Common myeloid progenitor, CD34-positive (primary cell): ENCODE measurements at regions of chr19 and their contacts with region 1.

Region 1: DNA sequence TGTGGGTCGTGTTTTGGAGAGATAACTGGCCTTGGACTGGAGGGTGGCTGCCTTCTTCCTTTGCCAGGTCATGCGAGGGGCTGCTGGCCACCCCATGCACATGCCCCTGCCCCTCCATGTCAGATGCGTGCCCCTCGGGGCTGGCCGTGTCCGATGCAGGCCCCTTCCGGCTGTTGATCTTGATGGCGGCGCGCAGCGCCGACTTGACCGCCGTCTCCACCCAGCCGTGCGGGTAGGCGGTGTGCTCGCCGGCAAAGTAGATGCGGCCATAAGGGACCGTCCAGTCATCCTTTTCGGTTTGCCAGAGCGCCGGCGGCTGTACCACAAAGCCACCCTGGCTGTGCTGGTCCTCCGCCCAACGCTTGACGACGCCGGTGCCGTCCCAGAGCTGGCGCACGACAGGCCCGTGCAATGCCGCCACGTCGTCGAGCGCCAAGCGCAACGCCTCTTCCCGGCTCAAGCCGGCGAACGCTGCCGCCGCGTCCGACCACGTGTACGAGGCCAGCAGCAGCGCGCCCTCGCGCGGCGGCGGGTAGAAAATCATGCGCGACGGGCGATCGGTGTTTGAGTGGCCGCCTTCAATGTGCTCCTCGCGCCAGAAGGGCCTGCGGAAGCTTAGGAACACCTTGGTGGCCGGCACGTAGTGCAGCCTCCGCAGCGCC is 6.9 kb downstream of the IL4I1 start:
- DNase-seq: peak; percentile 89 to 93 (median 91)
- H3K4me3 ChIP-seq: peak overlapping the region in 4 of 7 experiments; percentile 26 to 55 (median 48)
- H3K27ac ChIP-seq: no peak overlapping the region
- H3K4me1 ChIP-seq: peaks cover 0 to 9% (median 3%) of the 10 kb centered on the region in 4 experiments
- H3K27me3 ChIP-seq: peaks cover 0 to 19% (median 5%) of the 10 kb centered on the region in 5 experiments

Region 2: GRCh38 chr19:49877020-49877878 is 12.6 kb before region 1 on chr19 and contains the starts of genes AKT1S1 and TBC1D17:
- CTCF ChIA-PET with region 1: interaction called, 6 read pairs
- POLR2A ChIA-PET with region 1: interaction called, 10 read pairs
- DNase-seq: peak; percentile 100
- H3K4me3 ChIP-seq: peak within 1 kb of the TSS; percentile 68 to 100 (median 100)
- H3K27ac ChIP-seq: peak within 1 kb of the TSS; percentile 99 to 100
- H3K4me1 ChIP-seq: peaks cover 0 to 27% (median 22%) of the 10 kb centered on the region in 4 experiments
- H3K27me3 ChIP-seq: no peaks in the 10 kb centered on the region